Mammary epithelial cell (primary cell): ENCODE measurements at regions of chr13 and their contacts with region 1.

Region 1: GRCh38 chr13:31199849-31200636 is at the start of gene B3GLCT:
- DNase-seq: peak; percentile 78
- H3K4me3 ChIP-seq: peak within 1 kb of the TSS; percentile 63 to 80 (median 74)
- H3K27ac ChIP-seq: peak within 1 kb of the TSS; percentile 75
- H3K4me1 ChIP-seq: peaks cover 29% of the 10 kb centered on the region
- H3K27me3 ChIP-seq: no peaks in the 10 kb centered on the region
- CTCF ChIP-seq: peak; percentile 71 to 72
- total RNA-seq, gene B3GLCT: 5.9 to 9.3 TPM

Region 2: DNA sequence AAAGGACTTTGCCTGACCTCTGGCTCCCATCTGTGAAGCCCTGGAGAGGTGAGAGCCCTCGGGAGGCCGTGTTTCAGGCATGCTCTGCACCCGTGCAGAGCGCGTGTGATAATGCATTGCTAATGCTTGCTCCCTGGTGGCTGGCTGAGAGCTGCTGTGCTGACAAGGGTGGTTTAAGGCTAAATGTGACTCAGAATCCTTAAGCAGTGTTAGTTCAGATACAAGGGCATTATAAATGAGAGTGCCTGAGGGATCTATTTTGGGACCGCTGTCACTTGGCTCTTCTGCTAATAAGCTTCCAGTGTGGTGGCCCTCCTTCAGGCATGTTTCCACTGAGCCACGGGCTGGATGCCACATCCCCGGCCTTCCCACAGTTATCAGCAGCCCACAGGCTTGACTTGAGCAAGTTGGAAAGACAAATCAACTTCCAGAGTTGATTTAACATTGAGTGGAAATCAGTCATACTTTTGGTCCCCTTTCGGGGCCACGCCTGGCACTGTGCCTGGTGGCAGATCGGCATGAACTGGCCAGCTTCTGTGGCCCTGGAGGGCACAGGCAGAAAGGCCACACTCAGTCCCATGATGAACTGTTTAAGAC is 447.7 kb before region 1 on chr13:
- CTCF ChIA-PET with region 1: no interaction called
- dilution Hi-C with region 1: no loop called
- in situ Hi-C with region 1: no loop called
- intact Hi-C with region 1: no loop called
- DNase-seq: no peak
- H3K4me3 ChIP-seq: no peak overlapping the region
- H3K27ac ChIP-seq: no peak overlapping the region
- H3K4me1 ChIP-seq: no peaks in the 10 kb centered on the region
- H3K27me3 ChIP-seq: no peaks in the 10 kb centered on the region
- CTCF ChIP-seq: no peak

Region 3: DNA sequence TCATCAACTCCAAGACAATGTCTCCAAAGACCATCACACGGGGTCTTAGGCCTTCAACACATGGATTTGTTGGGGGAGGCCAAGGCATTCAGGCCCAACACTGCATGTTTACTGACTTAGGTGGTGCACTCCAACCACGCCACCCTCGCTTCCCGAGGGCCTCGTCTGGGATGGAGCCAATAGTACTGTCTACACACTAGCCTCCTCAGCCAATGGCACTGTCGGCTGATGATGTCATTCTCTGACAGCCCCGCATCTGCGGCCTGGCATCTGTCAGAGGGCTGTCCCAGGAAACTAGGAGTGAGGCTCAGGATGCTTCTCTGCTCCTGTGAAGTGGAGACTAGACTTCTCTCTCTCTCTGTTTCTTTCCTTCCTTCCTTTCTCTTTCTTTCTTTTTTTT is 170.9 kb before region 1 on chr13:
- CTCF ChIA-PET with region 1: no interaction called
- dilution Hi-C with region 1: no loop called
- in situ Hi-C with region 1: no loop called
- intact Hi-C with region 1: no loop called
- DNase-seq: no peak
- H3K4me3 ChIP-seq: no peak overlapping the region
- H3K27ac ChIP-seq: no peak overlapping the region
- H3K4me1 ChIP-seq: peaks cover 9% of the 10 kb centered on the region
- H3K27me3 ChIP-seq: no peaks in the 10 kb centered on the region
- CTCF ChIP-seq: no peak

Region 4: GRCh38 chr13:31131470-31131961 is 68.5 kb before region 1 on chr13:
- CTCF ChIA-PET with region 1: no interaction called
- dilution Hi-C with region 1: no loop called
- in situ Hi-C with region 1: no loop called
- intact Hi-C with region 1: no loop called
- DNase-seq: no peak
- H3K4me3 ChIP-seq: no peak overlapping the region
- H3K27ac ChIP-seq: no peak overlapping the region
- H3K4me1 ChIP-seq: no peaks in the 10 kb centered on the region
- H3K27me3 ChIP-seq: no peaks in the 10 kb centered on the region
- CTCF ChIP-seq: no peak

Region 5: DNA sequence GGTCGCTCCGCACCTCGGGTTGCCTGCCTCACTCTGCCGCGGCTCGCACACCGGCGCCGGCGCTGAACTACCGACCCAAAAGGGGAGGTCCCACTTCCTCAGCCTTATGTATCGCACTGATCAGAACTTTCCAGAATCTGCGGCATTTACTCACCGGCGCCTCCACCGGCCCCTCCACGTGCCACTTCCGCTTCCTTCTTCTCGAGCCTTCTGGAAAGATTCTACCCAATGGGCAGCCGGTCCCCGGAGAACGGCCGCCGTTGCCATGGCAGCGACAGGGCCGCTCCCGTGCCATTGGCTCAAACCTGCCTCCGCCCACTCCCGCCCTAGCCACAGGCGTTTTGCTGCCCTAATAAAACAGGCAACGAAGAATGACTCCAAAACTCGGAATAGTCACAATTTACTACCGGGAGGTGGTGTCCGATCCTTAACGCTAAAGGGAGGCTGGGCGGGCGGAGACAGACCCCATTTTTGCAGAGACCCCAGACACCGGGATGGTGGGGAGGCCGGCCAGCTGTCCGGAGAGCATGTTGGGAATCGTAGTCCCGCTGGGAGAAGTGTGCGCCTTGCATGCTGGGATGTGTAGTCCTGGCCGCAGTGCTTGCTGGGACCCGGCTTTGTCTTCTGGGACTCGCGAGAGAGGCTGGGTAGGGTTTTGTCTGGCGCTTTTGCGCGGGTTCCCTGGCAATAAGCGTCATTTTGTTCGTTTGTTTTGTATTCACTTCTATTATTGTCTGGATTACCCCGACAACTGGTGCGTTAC is 38.0 kb before region 1 on chr13 and contains the start of gene HSPH1:
- CTCF ChIA-PET with region 1: no interaction called
- dilution Hi-C with region 1: no loop called
- in situ Hi-C with region 1: no loop called
- intact Hi-C with region 1: loop called (anchors 1 kb)
- DNase-seq: peak; percentile 99
- H3K4me3 ChIP-seq: peak within 1 kb of the TSS; percentile 81 to 90 (median 84)
- H3K27ac ChIP-seq: peak within 1 kb of the TSS; percentile 97
- H3K4me1 ChIP-seq: peaks cover 7% of the 10 kb centered on the region
- H3K27me3 ChIP-seq: no peaks in the 10 kb centered on the region
- CTCF ChIP-seq: peak in 1 of 2 donors; percentile 35
- total RNA-seq, gene HSPH1: 49.0 to 113 TPM

Region 6: GRCh38 chr13:31424117-31424729 is 224.2 kb after region 1 on chr13:
- CTCF ChIA-PET with region 1: no interaction called
- dilution Hi-C with region 1: no loop called
- in situ Hi-C with region 1: no loop called
- intact Hi-C with region 1: loop called (anchors 1 kb)
- DNase-seq: peak; percentile 62
- H3K4me3 ChIP-seq: no peak overlapping the region
- H3K27ac ChIP-seq: no peak overlapping the region
- H3K4me1 ChIP-seq: no peaks in the 10 kb centered on the region
- H3K27me3 ChIP-seq: peaks cover 4% of the 10 kb centered on the region
- CTCF ChIP-seq: peak; percentile 92 to 96